Activated naive CD4-positive, alpha-beta T cell treated with anti-CD3 and anti-CD28 coated beads for 36 hours (primary cell): ENCODE measurements at regions of chr9 and their contacts with region 1.

Region 1: DNA sequence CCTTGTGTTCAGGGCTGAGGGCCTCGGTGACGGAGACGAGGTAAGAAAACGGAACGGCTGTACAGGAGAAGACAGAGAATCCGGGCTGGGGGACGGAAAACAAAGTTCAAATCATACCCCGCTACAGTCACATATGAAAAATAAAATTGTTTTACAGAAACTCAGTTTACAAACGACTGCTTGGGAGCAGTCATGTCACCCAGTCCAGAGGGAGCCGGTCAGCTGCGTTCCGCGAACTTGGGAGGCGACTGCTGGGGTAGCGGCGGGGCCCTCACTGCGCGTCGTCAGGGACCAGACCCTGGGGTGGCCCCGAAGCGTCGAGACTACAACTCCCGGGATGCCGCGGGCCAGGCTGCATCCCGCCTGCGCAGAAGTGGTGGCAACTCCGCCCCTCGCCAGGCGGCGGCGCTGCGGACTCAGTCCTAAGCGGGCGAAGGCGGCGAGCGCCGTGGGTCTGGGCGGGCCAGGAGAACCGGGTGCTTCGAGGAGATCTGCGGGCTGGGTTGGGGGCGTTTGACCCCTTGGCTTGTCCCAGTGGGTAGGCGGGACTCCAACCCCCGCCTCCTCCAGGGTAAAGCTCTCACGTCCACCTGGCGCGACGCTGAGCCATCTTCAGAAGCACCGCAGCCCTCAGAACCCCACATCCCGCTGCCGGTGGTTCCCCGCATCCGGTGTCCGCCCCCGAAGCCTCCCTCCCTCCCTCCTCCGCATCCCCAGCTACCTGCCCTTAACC is 4.0 kb downstream of the SIT1 start:
- DNase-seq: peak; percentile 94
- H3K4me3 Mint-ChIP-seq: peak overlapping the region; percentile 90
- H3K27ac Mint-ChIP-seq: peak overlapping the region; percentile 83
- H3K4me1 Mint-ChIP-seq: peaks cover 43% of the 10 kb centered on the region
- H3K27me3 Mint-ChIP-seq: no peaks in the 10 kb centered on the region

Region 2: DNA sequence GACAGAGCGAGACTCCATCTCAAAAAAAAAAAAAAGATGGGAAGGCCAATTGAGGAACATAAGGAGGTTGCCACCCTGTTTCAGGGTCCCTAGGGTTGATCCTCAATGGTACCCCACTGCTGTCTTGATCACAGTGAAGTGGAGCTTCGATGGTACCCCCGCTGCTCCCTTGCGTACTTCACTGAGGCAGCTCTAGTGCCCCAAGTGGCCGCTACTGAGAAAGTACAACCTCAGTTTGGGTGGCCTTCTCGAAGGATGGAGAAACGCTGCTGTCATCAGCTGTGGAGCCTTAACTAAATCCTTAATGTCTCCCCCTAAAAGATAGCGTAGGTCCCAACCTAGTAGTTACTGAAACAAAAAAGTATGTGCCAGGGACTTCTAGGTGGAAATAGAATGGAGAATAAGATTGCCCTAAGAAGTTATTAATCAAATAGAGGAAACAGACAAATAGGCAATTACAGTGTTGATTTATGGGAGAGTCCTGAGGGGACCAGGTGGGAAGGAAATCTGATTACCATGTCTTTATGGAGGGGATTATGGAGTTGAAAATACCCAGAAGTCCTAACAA is 35.4 kb before region 1 on chr9:
- CTCF ChIA-PET with region 1: interaction called, 142 read pairs
- intact Hi-C with region 1: no loop called
- DNase-seq: peak; percentile 67
- H3K4me3 Mint-ChIP-seq: no peak overlapping the region
- H3K27ac Mint-ChIP-seq: no peak overlapping the region
- H3K4me1 Mint-ChIP-seq: peaks cover 11% of the 10 kb centered on the region
- H3K27me3 Mint-ChIP-seq: no peaks in the 10 kb centered on the region

Region 3: DNA sequence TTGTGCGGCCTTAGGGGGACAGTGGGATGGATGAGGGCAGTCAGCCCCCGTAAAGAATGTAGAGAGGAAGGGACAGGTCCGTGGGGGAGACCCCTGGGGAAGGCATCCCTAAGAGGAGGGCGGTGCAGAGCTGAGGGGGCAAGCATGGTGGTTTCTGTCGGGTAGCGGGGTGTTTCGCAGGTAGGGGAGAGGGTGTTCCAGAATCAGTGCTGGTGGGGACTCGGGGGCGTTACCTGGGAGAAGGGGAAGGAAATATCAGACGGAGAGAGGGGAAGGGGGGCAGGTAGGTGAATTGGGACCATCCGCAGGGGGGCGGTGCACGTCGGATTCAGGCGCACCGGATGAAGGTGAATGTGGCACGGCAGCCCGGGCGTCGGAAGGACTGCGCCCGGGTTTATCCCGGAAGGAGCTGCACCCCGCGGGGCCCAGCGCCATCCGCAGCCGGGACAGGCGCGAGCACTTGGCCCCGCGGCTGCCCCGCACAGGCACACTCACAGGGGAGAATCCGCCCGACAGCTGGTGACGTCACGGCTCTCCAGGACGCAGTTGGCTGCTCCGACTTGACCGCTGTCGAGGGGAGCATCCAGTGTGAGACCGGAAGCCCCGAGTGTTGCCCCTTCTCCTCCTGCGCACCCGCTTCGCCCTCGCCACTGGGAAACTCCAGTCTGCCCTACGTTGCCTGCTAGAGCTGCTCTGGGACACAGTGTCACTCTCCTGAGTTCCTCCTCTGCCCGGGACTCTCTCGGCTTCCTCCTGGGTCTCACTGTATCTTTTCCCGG is 29.8 kb before region 1 on chr9:
- CTCF ChIA-PET with region 1: interaction called, 142 read pairs
- intact Hi-C with region 1: loop called (anchors 2 kb)
- DNase-seq: peak; percentile 79
- H3K4me3 Mint-ChIP-seq: peak overlapping the region; percentile 79
- H3K27ac Mint-ChIP-seq: peak overlapping the region; percentile 47
- H3K4me1 Mint-ChIP-seq: peaks cover 28% of the 10 kb centered on the region
- H3K27me3 Mint-ChIP-seq: no peaks in the 10 kb centered on the region

Region 4: DNA sequence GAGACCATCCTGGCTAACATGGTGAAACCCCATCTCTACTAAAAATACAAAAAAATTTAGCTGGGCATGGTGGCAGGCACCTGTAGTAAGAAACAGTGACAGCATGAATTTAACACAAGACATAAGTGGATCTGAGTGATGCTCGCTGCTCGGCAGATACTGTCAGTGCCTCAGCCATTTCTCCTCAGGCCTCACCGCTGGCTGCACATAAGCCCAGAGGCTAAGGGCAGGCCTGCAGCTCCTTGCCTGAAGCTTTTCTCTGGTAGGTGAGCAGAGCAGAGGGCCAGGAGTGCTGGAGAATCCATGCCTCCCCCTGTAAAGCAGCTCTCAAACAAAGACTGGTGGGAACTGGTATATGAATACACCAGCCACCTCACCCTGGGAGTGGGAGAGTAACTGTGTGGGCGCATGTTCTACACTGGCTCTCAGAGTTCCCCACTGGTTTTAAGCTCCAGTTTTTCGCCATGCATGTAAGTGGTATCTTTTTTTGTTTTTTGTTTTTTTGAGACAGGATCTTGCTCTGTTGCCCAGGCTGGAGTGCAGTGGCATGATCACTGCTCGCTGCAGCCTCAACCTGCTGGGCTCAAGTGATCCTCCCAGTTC is 18.2 kb before region 1 on chr9:
- CTCF ChIA-PET with region 1: interaction called, 11 read pairs
- intact Hi-C with region 1: no loop called
- DNase-seq: no peak
- H3K4me3 Mint-ChIP-seq: no peak overlapping the region
- H3K27ac Mint-ChIP-seq: no peak overlapping the region
- H3K4me1 Mint-ChIP-seq: no peaks in the 10 kb centered on the region
- H3K27me3 Mint-ChIP-seq: no peaks in the 10 kb centered on the region

Region 5: GRCh38 chr9:35636135-35636876 is 10.4 kb before region 1 on chr9:
- CTCF ChIA-PET with region 1: interaction called, 9 read pairs
- intact Hi-C with region 1: loop called (anchors 1 kb)
- DNase-seq: no peak
- H3K4me3 Mint-ChIP-seq: no peak overlapping the region
- H3K27ac Mint-ChIP-seq: no peak overlapping the region
- H3K4me1 Mint-ChIP-seq: peaks cover 46% of the 10 kb centered on the region
- H3K27me3 Mint-ChIP-seq: no peaks in the 10 kb centered on the region

Region 6: GRCh38 chr9:35657546-35658136 is 10.9 kb after region 1 on chr9 and contains the start of gene RMRP:
- CTCF ChIA-PET with region 1: interaction called, 149 read pairs
- intact Hi-C with region 1: loop called (anchors 1 kb)
- DNase-seq: peak; percentile 93
- H3K4me3 Mint-ChIP-seq: peak within 1 kb of the TSS; percentile 84
- H3K27ac Mint-ChIP-seq: peak within 1 kb of the TSS; percentile 94
- H3K4me1 Mint-ChIP-seq: peaks cover 60% of the 10 kb centered on the region
- H3K27me3 Mint-ChIP-seq: peaks cover 3% of the 10 kb centered on the region
- total RNA-seq, gene RMRP: 7,381 to 12,571 TPM

Region 7: GRCh38 chr9:35748858-35749514 is 102.3 kb after region 1 on chr9 and contains the starts of genes GBA2 and RGP1:
- CTCF ChIA-PET with region 1: no interaction called
- intact Hi-C with region 1: loop called (anchors 1 kb)
- DNase-seq: peak; percentile 67
- H3K4me3 Mint-ChIP-seq: peak within 1 kb of the TSS; percentile 89
- H3K27ac Mint-ChIP-seq: peak within 1 kb of the TSS; percentile 88
- H3K4me1 Mint-ChIP-seq: peaks cover 32% of the 10 kb centered on the region
- H3K27me3 Mint-ChIP-seq: no peaks in the 10 kb centered on the region
- total RNA-seq, gene GBA2: 20.3 to 22.7 TPM
- total RNA-seq, gene RGP1: 12.0 to 13.3 TPM

Region 8: DNA sequence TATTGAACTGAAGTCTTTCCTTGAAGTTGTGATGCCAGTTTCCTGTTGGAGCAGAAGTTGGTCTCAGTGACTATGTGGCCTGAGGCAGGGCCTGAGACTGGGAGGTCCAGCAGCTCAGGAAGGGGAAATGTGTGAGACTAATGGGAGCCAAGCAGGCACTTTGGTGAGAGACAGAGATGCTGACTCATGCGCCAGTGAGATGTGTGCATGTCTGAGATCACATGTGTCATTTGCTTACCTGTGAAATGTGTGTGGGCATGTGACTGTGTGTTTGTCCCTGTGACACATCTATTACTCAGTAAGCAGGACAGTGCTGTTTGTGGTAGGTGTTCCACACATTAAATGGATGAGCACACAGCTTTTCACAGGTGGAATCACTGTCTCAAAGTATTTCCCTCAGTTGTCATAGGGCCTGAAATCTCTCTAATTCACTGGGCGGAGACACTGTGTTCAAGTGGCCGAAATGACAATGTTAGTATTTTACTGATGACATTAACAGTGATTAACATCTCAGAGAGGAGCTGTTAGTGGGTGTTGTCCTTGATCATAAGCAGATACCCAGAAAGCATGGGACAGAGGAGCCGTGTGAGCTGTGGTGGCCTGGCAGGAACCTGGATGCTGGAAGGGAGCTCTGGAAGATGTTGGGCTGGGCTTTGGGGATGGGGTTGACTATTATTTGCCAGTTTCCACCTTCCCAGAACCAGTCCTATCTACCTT is 152.1 kb after region 1 on chr9:
- CTCF ChIA-PET with region 1: no interaction called
- intact Hi-C with region 1: no loop called
- DNase-seq: peak; percentile 64
- H3K4me3 Mint-ChIP-seq: no peak overlapping the region
- H3K27ac Mint-ChIP-seq: no peak overlapping the region
- H3K4me1 Mint-ChIP-seq: peaks cover 12% of the 10 kb centered on the region
- H3K27me3 Mint-ChIP-seq: no peaks in the 10 kb centered on the region